CD14-positive monocyte (primary cell): ENCODE measurements at regions of chr15 and their contacts with region 1.

Region 1: GRCh38 chr15:92797168-92797951 is 102.8 kb upstream of the CHD2 start:
- DNase-seq: peak; percentile 68 to 94 (median 77)
- H3K4me3 ChIP-seq: no peak overlapping the region
- H3K4me3 Mint-ChIP-seq: no peak overlapping the region
- H3K27ac ChIP-seq: peak overlapping the region in 1 of 2 donors; percentile 6
- H3K27ac Mint-ChIP-seq: peak overlapping the region in 5 of 7 donors; percentile 65 to 94 (median 88)
- H3K4me1 ChIP-seq: peaks cover 17 to 30% of the 10 kb centered on the region in 2 donors
- H3K4me1 Mint-ChIP-seq: peaks cover 23% of the 10 kb centered on the region
- H3K27me3 ChIP-seq: no peaks in the 10 kb centered on the region
- H3K27me3 Mint-ChIP-seq: peaks cover 0 to 5% (median 0%) of the 10 kb centered on the region in 3 donors
- CTCF ChIP-seq: peak; percentile 78

Region 2: GRCh38 chr15:92763459-92763858 is 33.9 kb before region 1 on chr15:
- intact Hi-C with region 1: no loop called
- DNase-seq: peak; percentile 3 to 42 (median 26)
- H3K4me3 ChIP-seq: no peak overlapping the region
- H3K4me3 Mint-ChIP-seq: no peak overlapping the region
- H3K27ac ChIP-seq: no peak overlapping the region
- H3K27ac Mint-ChIP-seq: no peak overlapping the region
- H3K4me1 ChIP-seq: no peaks in the 10 kb centered on the region
- H3K4me1 Mint-ChIP-seq: peaks cover 2% of the 10 kb centered on the region
- H3K27me3 ChIP-seq: no peaks in the 10 kb centered on the region
- H3K27me3 Mint-ChIP-seq: peaks cover 0 to 6% (median 0%) of the 10 kb centered on the region in 3 donors
- CTCF ChIP-seq: no peak

Region 3: DNA sequence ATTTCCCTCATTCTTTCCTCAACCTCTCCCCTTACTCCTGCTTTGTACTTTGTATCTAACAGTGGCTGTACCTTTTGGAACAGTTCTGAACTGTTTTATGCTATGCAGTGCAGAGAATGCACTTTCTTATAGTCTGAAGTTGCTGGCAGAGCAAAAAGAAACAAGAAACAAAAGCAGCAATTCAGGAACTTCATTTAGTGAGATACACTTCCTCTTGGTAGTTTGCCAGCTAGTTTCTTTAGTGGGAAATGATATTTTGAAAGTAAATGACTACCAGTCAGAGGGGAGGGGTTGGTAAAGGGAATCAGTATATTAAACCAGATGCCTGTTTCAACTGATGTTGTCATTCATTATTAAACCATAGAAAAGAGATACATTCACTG is 47.8 kb after region 1 on chr15:
- intact Hi-C with region 1: loop called in 1 of 2 experiments (anchors 5 kb)
- DNase-seq: peak; percentile 88 to 98 (median 89)
- H3K4me3 ChIP-seq: peak overlapping the region; percentile 1 to 57 (median 27)
- H3K4me3 Mint-ChIP-seq: peak overlapping the region; percentile 37 to 88
- H3K27ac ChIP-seq: peak overlapping the region; percentile 84 to 88
- H3K27ac Mint-ChIP-seq: peak overlapping the region; percentile 90 to 97 (median 95)
- H3K4me1 ChIP-seq: peaks cover 48 to 59% of the 10 kb centered on the region in 2 donors
- H3K4me1 Mint-ChIP-seq: peaks cover 50% of the 10 kb centered on the region
- H3K27me3 ChIP-seq: no peaks in the 10 kb centered on the region
- H3K27me3 Mint-ChIP-seq: peaks cover 0 to 1% (median 0%) of the 10 kb centered on the region in 3 donors
- CTCF ChIP-seq: no peak